Vagina (tissue), 2 donors: ENCODE measurements at regions of chr2 and their contacts with region 1.

Region 1: GRCh38 chr2:182784777-182785176 is 68.7 kb downstream of the DNAJC10 start:
- DNase-seq: no peak
- H3K4me3 ChIP-seq: no peak overlapping the region
- H3K27ac ChIP-seq: no peak overlapping the region
- H3K4me1 ChIP-seq: no peaks in the 10 kb centered on the region
- H3K27me3 ChIP-seq: no peaks in the 10 kb centered on the region
- CTCF ChIP-seq: peak in 1 of 3 experiments; percentile 24
- POLR2A ChIP-seq: no peak

Region 2: GRCh38 chr2:182191061-182191460 is 593.7 kb before region 1 on chr2:
- intact Hi-C with region 1: no loop called
- DNase-seq: no peak
- H3K4me3 ChIP-seq: no peak overlapping the region
- H3K27ac ChIP-seq: no peak overlapping the region
- H3K4me1 ChIP-seq: no peaks in the 10 kb centered on the region
- H3K27me3 ChIP-seq: no peaks in the 10 kb centered on the region
- CTCF ChIP-seq: no peak
- POLR2A ChIP-seq: no peak

Region 3: DNA sequence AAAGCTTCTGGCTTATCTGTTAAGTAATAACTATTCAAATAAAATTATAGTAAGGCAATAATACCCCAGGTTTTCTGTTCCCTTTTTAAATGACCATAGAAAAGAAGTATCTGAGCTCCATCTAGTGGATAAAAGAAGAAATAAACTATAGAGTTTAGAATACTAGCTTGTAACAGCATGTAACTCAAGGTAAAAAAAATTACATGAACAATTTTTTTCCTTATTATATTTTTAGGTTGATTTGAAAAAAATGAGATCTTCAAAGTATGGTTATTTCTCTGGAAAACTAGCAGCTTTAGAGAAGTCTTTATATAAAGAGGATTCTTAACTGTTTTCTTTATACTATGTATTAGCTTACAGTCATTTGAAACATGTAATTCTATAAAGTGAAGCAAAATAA is 195.3 kb after region 1 on chr2:
- intact Hi-C with region 1: loop called (anchors 10 kb)
- DNase-seq: no peak
- H3K4me3 ChIP-seq: no peak overlapping the region
- H3K27ac ChIP-seq: no peak overlapping the region
- H3K4me1 ChIP-seq: no peaks in the 10 kb centered on the region
- H3K27me3 ChIP-seq: no peaks in the 10 kb centered on the region
- CTCF ChIP-seq: peak; percentile 14 to 57 (median 37)
- POLR2A ChIP-seq: no peak